ENCODE measurements at regions of chr5 and their contacts with region 1.

Region 1: DNA sequence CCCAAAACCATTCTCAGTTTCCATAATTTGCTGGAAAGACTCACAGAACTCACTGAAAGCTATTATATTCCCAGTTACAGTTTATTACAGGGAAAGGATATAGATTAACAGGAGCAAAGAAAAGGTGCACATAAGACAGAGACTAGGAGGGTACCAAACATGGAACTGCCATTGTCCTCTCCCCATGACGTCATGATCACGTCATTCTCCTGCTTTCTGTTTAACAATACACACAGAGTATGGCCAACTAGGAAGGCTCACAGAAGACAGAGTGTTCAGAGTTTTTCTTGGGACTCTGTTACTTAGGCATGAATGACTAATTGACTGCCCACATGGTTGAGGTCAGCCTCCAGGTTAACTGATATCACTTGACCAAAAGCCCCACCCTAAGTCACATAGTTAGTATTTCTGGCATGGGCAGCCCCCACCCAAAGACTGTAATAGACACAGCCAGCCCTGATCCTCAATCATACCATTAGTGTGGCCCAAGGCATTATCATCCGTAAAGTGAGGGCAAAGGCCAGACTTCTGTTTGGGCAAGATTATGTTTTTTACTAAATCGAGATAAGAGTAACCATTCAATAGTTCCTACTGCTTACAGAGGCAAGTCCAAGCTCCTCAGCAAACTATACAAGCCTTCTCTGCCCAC is 353.5 kb upstream of the POU5F2 start:
- DNase-seq: peak; percentile 86 to 93
- H3K4me3 ChIP-seq: no peak overlapping the region
- H3K4me3 Mint-ChIP-seq: peak overlapping the region; percentile 2
- H3K27ac Mint-ChIP-seq: peak overlapping the region; percentile 65
- H3K4me1 ChIP-seq: peaks cover 33% of the 10 kb centered on the region
- H3K4me1 Mint-ChIP-seq: peaks cover 29% of the 10 kb centered on the region
- H3K27me3 ChIP-seq: no peaks in the 10 kb centered on the region
- H3K27me3 Mint-ChIP-seq: no peaks in the 10 kb centered on the region
- CTCF ChIP-seq: no peak

Region 2: DNA sequence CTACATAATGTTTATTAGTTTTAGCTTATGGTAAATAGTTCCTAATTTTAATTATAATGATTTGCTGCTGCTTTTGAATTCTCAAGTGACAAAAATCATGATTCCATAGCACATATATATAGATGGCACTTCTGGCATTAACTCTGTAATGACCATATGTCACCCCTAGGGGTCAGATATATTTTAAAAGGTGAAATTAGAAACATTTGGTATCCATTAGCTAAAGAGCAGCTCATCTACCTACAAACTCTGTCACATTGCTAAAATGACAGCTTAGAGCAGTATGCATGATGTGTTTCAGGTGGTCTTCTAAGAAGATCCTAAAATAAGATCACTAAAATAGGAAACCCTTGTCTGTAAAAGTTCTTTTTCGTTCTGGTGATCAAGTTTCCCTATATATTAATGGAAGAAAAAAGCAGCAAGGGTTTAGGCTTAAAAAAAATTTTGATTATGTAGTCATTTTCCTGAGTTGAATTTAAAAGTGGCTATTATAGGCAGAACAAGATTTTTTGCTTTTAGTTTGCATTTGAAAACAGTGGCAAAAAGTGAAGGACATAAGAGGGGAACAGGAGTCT is 195.8 kb before region 1 on chr5:
- CTCF ChIA-PET with region 1: no interaction called
- POLR2A ChIA-PET with region 1: no interaction called
- intact Hi-C with region 1: loop called (anchors 5 kb)
- DNase-seq: peak in 1 of 2 experiments; percentile 38
- H3K4me3 ChIP-seq: no peak overlapping the region
- H3K4me3 Mint-ChIP-seq: no peak overlapping the region
- H3K27ac Mint-ChIP-seq: no peak overlapping the region
- H3K4me1 ChIP-seq: no peaks in the 10 kb centered on the region
- H3K4me1 Mint-ChIP-seq: peaks cover 7% of the 10 kb centered on the region
- H3K27me3 ChIP-seq: no peaks in the 10 kb centered on the region
- H3K27me3 Mint-ChIP-seq: no peaks in the 10 kb centered on the region
- CTCF ChIP-seq: peak; percentile 31 to 56

Region 3: DNA sequence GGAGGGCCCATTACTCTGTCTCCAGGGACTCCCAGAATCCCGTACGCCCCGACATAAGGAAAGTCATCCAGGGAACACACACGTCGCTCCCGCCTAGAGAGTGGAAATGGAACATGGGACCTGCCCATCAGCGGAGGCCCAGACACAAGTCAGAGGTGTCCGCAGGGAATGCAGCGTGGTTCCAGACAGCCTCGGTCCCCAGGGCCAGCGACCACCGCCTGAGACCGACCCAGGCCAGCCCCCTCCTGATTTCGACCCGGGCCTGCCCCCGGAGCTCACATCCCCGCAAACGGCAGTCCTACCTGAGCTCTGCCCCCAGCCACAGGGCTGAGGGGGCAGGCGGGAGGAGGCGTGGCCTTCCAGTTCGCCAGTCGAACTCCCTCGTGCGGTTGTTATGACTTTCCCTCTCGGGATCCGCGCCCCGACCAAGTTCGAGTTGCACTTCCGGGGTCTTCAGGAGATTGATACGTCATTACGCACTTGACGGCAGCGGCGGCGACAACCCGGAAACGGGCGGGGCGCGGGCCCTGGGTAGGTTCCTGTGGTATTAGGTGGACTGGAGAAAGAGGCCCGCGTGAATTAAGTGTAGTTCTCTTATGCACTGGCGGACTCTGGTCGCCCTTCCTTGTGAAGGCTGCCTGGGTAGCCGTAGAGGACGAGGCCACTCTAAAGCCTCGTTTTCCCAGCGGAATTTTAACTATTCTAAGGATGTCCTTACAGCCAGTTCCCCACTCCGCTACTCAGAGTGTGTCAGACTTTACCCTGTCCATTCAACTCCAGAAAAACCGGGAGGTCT is 16.5 kb after region 1 on chr5:
- CTCF ChIA-PET with region 1: no interaction called
- POLR2A ChIA-PET with region 1: interaction called, 5 read pairs
- intact Hi-C with region 1: loop called (anchors 1 kb)
- DNase-seq: peak; percentile 96 to 97
- H3K4me3 ChIP-seq: peak overlapping the region; percentile 86
- H3K4me3 Mint-ChIP-seq: peak overlapping the region; percentile 92
- H3K27ac Mint-ChIP-seq: peak overlapping the region; percentile 96
- H3K4me1 ChIP-seq: peaks cover 13% of the 10 kb centered on the region
- H3K4me1 Mint-ChIP-seq: peaks cover 20% of the 10 kb centered on the region
- H3K27me3 ChIP-seq: no peaks in the 10 kb centered on the region
- H3K27me3 Mint-ChIP-seq: no peaks in the 10 kb centered on the region
- CTCF ChIP-seq: peak in 1 of 2 experiments; percentile 40

Region 4: DNA sequence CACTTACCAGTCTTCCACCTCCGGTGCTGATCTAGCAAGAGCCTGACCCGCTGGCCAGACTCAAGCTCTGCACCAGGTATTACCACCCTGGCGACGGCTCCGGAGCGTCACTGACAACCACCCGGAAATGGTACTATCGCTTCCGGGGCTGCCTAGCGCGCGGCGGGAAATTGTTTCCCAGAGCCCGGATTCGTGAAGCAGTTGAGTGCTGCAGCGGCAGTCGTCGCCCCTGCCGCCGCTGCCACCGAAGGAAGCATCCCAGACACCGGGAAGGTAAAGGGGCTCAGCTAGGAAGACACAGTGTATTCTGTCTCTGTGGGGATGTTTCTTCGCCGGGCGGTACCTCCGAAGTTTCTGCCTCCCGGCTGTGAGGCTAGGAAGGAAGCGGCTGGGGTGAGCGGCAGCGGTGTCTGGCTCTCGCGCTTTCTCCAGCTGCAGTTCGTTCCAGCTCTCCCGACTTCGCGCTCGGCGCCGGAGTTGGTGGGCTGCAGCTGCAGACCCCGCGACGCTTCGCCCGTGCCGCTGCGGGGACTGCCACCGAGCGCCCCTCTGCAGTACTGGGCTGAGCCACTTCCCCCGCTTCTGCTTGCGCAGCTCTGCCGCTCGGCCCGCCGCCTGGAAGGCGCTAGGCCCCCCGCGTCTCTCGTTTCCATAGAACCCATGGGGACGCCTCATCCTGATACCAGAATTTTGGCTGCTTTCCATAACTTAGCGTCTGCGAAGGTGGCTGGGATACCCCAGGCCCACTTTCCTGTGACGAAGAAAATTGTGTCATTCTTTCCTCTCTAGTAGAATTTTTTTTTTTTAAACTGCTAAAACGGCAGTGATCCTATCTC is 523.8 kb after region 1 on chr5 and contains the starts of genes KIAA0825 and SLF1:
- CTCF ChIA-PET with region 1: no interaction called
- POLR2A ChIA-PET with region 1: no interaction called
- intact Hi-C with region 1: loop called (anchors 5 kb)
- DNase-seq: peak; percentile 89
- H3K4me3 ChIP-seq: peak within 1 kb of the TSS; percentile 82
- H3K4me3 Mint-ChIP-seq: peak within 1 kb of the TSS; percentile 82
- H3K27ac Mint-ChIP-seq: peak within 1 kb of the TSS; percentile 96
- H3K4me1 ChIP-seq: peaks cover 10% of the 10 kb centered on the region; the same call in 1 of the 2 replicates
- H3K4me1 Mint-ChIP-seq: no peaks in the 10 kb centered on the region
- H3K27me3 ChIP-seq: no peaks in the 10 kb centered on the region
- H3K27me3 Mint-ChIP-seq: no peaks in the 10 kb centered on the region
- CTCF ChIP-seq: no peak
- total RNA-seq, gene KIAA0825: 0.26 and 0.50 TPM in 2 replicates
- total RNA-seq, gene SLF1: 7.9 and 11.7 TPM in 2 replicates

Region 5: GRCh38 chr5:95304711-95305110 is 1209.8 kb after region 1 on chr5:
- CTCF ChIA-PET with region 1: no interaction called
- POLR2A ChIA-PET with region 1: no interaction called
- intact Hi-C with region 1: no loop called
- DNase-seq: peak in 1 of 2 experiments; percentile 11
- H3K4me3 ChIP-seq: no peak overlapping the region
- H3K4me3 Mint-ChIP-seq: no peak overlapping the region
- H3K27ac Mint-ChIP-seq: no peak overlapping the region
- H3K4me1 ChIP-seq: no peaks in the 10 kb centered on the region
- H3K4me1 Mint-ChIP-seq: no peaks in the 10 kb centered on the region
- H3K27me3 ChIP-seq: no peaks in the 10 kb centered on the region
- H3K27me3 Mint-ChIP-seq: peaks cover 19% of the 10 kb centered on the region
- CTCF ChIP-seq: no peak